Ovary (tissue), 10 donors: ENCODE measurements at regions of chr5 and their contacts with region 1.

Region 1: GRCh38 chr5:134577796-134578363 is 52.4 kb downstream of the JADE2 start:
- DNase-seq: peak; percentile 73 to 89 (median 84)
- H3K4me3 ChIP-seq: no peak overlapping the region
- H3K27ac ChIP-seq: no peak overlapping the region
- H3K4me1 ChIP-seq: no peaks in the 10 kb centered on the region
- H3K27me3 ChIP-seq: no peaks in the 10 kb centered on the region
- CTCF ChIP-seq: peak; percentile 59 to 77 (median 70)
- EP300 ChIP-seq: no peak
- POLR2A ChIP-seq: no peak

Region 2: DNA sequence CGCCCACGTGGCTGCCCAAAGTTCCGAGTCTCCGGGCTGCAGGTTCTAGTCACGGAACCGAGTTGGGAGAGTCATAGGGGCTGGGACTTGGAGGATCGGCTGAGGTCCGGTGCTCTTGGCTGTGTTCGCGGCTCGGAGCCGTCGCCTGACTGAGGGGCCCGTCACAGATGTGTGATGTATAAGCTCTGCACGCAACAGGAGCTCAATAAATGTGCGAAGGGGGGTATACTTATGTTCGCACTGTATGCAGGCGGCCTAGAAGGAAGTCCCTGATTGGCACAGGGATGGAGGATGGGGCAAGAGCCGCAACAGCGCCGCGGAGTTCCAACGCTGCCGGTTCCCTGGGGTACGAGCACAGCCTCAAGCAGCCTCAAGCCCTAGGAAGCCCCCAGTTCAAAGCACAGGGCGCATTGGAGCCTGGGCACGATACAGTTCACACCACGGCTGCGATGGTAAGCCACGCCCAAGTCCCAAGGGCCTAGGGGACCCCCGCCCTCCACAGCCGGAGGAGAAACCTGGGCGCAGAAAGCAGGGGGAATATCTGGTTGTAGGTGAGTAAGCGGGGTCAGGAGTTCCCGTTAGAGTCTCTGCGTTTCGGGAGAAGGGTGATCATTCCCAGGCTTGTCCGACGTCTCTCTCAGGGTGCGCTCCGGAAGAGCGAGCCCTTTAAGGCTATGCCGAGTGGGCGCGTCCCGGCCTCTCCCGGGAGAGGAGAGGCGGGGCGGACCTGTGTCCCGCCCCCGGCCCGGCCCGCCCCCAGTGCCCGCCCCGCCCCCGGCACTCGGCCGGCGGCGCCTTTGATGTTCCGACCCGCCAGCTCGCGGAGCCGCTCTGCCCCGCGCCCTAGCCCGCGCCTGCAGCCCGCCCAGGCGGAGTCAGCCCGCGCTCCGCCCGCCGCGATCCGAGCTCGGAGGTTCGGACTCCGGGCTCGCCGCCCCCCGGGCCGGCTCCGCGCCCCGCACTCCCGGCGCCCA is 463.7 kb before region 1 on chr5 and contains the start of gene TCF7:
- intact Hi-C with region 1: no loop called
- DNase-seq: peak; percentile 78 to 87 (median 83)
- H3K4me3 ChIP-seq: peak within 1 kb of the TSS; percentile 39
- H3K27ac ChIP-seq: no peak within 1 kb of the TSS
- H3K4me1 ChIP-seq: peaks cover 5% of the 10 kb centered on the region
- H3K27me3 ChIP-seq: no peaks in the 10 kb centered on the region
- CTCF ChIP-seq: no peak
- EP300 ChIP-seq: no peak
- POLR2A ChIP-seq: no peak
- total RNA-seq, gene TCF7: 2.9 to 15.2 (median 4.2) TPM

Region 3: DNA sequence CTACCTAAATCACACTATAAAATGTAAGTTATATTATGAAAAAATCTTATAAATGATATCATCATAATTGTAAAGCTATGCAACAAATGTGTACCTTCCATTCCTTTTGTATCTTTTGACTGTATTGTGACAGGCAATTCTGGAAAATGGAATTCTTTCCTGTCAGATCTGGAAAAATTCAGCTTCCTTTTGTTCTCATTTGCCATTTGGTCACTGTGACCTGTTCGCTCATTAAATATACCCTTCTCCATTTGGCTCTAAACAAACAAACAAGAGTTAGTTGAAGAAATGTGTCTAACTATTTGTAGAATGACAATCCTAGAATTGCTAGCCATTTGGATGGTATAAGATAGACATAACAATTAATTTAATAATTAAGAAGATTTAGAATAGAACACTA is 273.6 kb before region 1 on chr5:
- intact Hi-C with region 1: loop called in 2 of 4 experiments (anchors 5 to 10 kb)
- DNase-seq: no peak
- H3K4me3 ChIP-seq: no peak overlapping the region
- H3K27ac ChIP-seq: no peak overlapping the region
- H3K4me1 ChIP-seq: peaks cover 1% of the 10 kb centered on the region
- H3K27me3 ChIP-seq: no peaks in the 10 kb centered on the region
- CTCF ChIP-seq: no peak
- EP300 ChIP-seq: no peak
- POLR2A ChIP-seq: no peak

Region 4: DNA sequence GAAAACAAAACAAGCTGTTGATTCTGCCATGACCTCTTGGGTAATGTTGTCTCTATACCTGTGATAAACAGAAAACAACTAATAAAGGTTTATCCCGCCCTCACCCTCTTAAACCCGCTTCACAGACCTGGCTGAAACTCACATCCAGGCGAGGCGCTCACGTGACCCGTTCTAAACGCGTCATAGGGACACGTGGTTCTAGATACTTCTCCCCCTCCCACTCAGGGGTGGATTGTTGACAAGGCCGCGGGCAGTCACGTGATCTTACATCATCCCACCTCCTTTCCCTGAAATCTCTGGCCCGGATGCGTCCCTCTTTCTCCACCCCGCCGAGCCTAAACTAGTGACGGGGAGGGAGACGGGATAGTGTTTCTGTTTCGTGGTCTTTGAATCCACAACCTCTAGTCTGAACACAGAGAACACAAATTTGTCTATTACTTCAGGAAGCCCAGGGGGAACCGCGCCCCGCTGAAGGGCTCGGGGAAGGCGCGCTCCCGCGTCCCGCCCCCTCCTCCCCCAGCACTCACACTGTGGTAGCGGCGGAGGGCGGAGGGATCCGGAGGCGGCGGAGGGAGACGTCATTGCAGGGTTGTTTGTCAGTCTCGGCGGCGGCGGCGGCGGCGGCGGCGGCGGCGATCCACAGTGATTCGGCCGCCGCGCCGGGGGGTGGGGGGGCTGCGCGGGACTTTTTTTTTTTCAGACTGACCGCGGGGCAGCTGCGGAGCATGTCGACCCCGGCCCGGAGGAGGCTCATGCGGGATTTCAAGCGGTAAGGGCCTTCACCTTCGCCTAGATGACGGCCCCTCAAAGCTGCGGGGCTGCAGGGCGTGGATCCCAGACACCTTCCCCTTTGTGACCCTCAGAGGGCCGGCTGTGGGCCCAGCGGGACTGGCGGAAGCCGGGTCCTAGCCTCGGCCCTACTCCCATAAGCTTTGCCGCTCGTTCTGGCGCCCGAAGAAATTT is 206.7 kb before region 1 on chr5 and contains the start of gene UBE2B:
- intact Hi-C with region 1: loop called in 1 of 4 experiments (anchors 5 kb)
- DNase-seq: peak; percentile 97 to 99 (median 98)
- H3K4me3 ChIP-seq: peak within 1 kb of the TSS; percentile 97
- H3K27ac ChIP-seq: peak within 1 kb of the TSS; percentile 89 to 97
- H3K4me1 ChIP-seq: peaks cover 6% of the 10 kb centered on the region
- H3K27me3 ChIP-seq: no peaks in the 10 kb centered on the region
- CTCF ChIP-seq: no peak
- EP300 ChIP-seq: peak; percentile 87
- POLR2A ChIP-seq: peak; percentile 94
- total RNA-seq, gene UBE2B: 54.1 to 101 (median 68.1) TPM

Region 5: GRCh38 chr5:135013947-135014570 is 436.2 kb after region 1 on chr5:
- intact Hi-C with region 1: no loop called
- DNase-seq: peak in 1 of 5 donors; percentile 7
- H3K4me3 ChIP-seq: no peak overlapping the region
- H3K27ac ChIP-seq: no peak overlapping the region
- H3K4me1 ChIP-seq: no peaks in the 10 kb centered on the region
- H3K27me3 ChIP-seq: no peaks in the 10 kb centered on the region
- CTCF ChIP-seq: no peak
- EP300 ChIP-seq: no peak
- POLR2A ChIP-seq: no peak